ENCODE measurements at regions of chr12 and their contacts with region 1.

Region 1: DNA sequence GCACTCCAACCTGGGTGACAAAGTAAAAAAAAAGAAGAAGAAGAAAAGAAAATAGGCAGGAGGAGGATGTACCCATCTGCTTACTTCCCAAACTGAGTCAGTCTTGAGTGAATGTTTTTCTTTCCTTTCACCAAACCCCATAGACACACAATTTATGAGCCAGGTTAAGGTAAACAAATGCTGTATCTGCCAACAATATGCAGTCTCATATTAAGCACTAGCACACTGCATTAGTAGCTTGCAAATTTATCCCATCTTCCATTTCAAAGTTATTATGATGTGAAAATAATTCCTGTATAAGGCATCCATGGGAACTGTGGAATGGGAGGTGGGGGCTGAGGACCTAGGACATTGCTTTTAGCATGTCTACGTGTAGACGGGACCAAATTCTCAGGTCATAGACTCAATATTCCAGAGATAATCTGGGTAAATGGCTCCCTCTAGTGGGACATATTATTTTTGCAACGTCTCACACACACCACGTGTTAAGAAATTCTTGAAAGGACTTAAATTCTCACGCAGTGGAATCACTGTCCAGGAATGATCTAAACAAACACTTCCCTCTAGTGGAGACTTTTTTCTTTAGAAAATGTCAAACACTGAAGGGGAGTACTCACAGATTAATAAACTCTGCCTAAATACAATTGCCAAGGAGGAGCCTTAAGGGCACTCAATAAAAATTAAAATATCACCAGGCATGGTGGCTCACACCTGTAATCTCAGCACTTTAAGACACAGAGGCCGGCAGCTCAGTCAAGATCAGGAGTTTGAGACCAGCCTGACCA is 17.1 kb upstream of the OR10P1 start:
- DNase-seq: peak; percentile 91
- H3K4me3 ChIP-seq: no peak overlapping the region
- H3K27ac ChIP-seq: no peak overlapping the region
- H3K4me1 ChIP-seq: no peaks in the 10 kb centered on the region
- CTCF ChIP-seq: peak; percentile 98

Region 2: GRCh38 chr12:55188974-55189556 is 430.5 kb before region 1 on chr12:
- CTCF ChIA-PET with region 1: no interaction called
- POLR2A ChIA-PET with region 1: no interaction called
- intact Hi-C with region 1: loop called (anchors 1 kb)
- DNase-seq: peak; percentile 78
- H3K4me3 ChIP-seq: no peak overlapping the region
- H3K27ac ChIP-seq: no peak overlapping the region
- H3K4me1 ChIP-seq: no peaks in the 10 kb centered on the region
- CTCF ChIP-seq: peak; percentile 92

Region 3: GRCh38 chr12:55446326-55446725 is 173.2 kb before region 1 on chr12:
- CTCF ChIA-PET with region 1: no interaction called
- POLR2A ChIA-PET with region 1: no interaction called
- intact Hi-C with region 1: loop called (anchors 5 kb)
- DNase-seq: no peak
- H3K4me3 ChIP-seq: no peak overlapping the region
- H3K27ac ChIP-seq: no peak overlapping the region
- H3K4me1 ChIP-seq: no peaks in the 10 kb centered on the region
- CTCF ChIP-seq: peak; percentile 32; the same call in 1 of the 2 replicates